PC-3 (cell line): ENCODE measurements at regions of chr9 and their contacts with region 1.

Region 1: GRCh38 chr9:76761448-76761847 is 2.8 kb upstream of the PCA3 start:
- DNase-seq: peak; percentile 19
- ATAC-seq: no peak
- H3K4me3 ChIP-seq: no peak overlapping the region
- H3K27ac ChIP-seq: no peak overlapping the region
- H3K4me1 ChIP-seq: no peaks in the 10 kb centered on the region
- H3K27me3 ChIP-seq: peaks cover 7% of the 10 kb centered on the region; the same call in 1 of the 2 replicates
- CTCF ChIP-seq: peak; percentile 58

Region 2: GRCh38 chr9:76512826-76513225 is 248.6 kb before region 1 on chr9:
- CTCF ChIA-PET with region 1: no interaction called
- POLR2A ChIA-PET with region 1: no interaction called
- intact Hi-C with region 1: no loop called
- DNase-seq: no peak
- ATAC-seq: no peak
- H3K4me3 ChIP-seq: no peak overlapping the region
- H3K27ac ChIP-seq: no peak overlapping the region
- H3K4me1 ChIP-seq: no peaks in the 10 kb centered on the region
- H3K27me3 ChIP-seq: 0 out of 2 replicates have a peak, but pooled peaks cover 15% of the 10 kb centered on the region
- CTCF ChIP-seq: no peak

Region 3: DNA sequence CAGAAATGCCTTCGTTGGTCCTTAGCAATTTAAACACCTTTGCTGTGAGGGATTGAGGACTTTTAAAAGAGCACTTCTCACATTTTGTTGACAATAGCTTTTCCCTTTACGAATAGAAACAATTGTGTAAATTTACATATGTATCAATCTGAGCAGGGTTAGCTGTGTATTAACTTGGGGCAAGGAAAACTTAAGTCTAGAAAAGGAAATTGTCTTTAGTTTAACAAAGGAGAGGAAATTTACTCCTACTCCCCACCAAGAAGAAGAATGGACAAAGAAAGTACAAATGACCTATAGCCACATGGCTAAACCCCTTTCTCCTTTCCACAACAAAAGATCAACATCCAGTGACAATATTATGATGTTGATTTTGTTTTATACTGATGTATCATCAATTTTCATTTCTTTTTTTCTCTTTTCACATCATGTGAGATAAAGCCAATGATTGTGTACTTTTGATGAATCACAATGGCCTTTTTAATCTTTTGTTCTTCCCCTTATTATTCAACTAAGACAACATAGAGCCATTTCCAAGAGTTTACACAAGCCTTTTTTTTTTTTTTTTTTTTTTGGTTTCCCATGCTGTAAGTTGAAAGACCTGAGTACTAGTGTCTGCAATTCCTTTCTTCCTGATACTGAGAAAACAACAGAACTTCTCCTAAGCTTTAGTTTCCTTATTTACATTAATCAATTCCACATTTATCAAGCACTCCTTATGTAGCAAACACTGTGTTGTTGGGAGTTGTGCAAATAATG is 277.0 kb after region 1 on chr9:
- CTCF ChIA-PET with region 1: no interaction called
- POLR2A ChIA-PET with region 1: no interaction called
- intact Hi-C with region 1: no loop called
- DNase-seq: no peak
- ATAC-seq: no peak
- H3K4me3 ChIP-seq: no peak overlapping the region
- H3K27ac ChIP-seq: no peak overlapping the region
- H3K4me1 ChIP-seq: no peaks in the 10 kb centered on the region
- H3K27me3 ChIP-seq: peaks cover 8% of the 10 kb centered on the region
- CTCF ChIP-seq: no peak

Region 4: GRCh38 chr9:77149879-77150278 is 388.4 kb after region 1 on chr9:
- CTCF ChIA-PET with region 1: no interaction called
- POLR2A ChIA-PET with region 1: no interaction called
- intact Hi-C with region 1: loop called (anchors 2 kb)
- DNase-seq: no peak
- ATAC-seq: no peak
- H3K4me3 ChIP-seq: no peak overlapping the region
- H3K27ac ChIP-seq: no peak overlapping the region
- H3K4me1 ChIP-seq: no peaks in the 10 kb centered on the region
- H3K27me3 ChIP-seq: peaks cover 11% of the 10 kb centered on the region; the same call in 1 of the 2 replicates
- CTCF ChIP-seq: no peak